Activated T-helper 2 cell treated with anti-CD3 and anti-CD28 coated beads, Interferon-gamma antibody, Interleukin-2, Interleukin-4, amounts not matched to agents 10 μg/mL and 5 μg/mL and 100 μg/mL, durations not matched to agents 14 hours and 24 hours and 36 hours (primary cell): ENCODE measurements at regions of chr4 and their contacts with region 1.

Region 1: GRCh38 chr4:14856076-14856933 is 146.0 kb upstream of the CPEB2 start:
- DNase-seq: peak; percentile 24
- H3K4me3 Mint-ChIP-seq: no peak overlapping the region
- H3K27ac Mint-ChIP-seq: peak overlapping the region; percentile 81
- H3K4me1 Mint-ChIP-seq: peaks cover 26% of the 10 kb centered on the region
- H3K27me3 Mint-ChIP-seq: no peaks in the 10 kb centered on the region

Region 2: GRCh38 chr4:14787894-14788293 is 68.4 kb before region 1 on chr4:
- intact Hi-C with region 1: loop called (anchors 1 kb)
- DNase-seq: no peak
- H3K4me3 Mint-ChIP-seq: no peak overlapping the region
- H3K27ac Mint-ChIP-seq: no peak overlapping the region
- H3K4me1 Mint-ChIP-seq: peaks cover 14% of the 10 kb centered on the region
- H3K27me3 Mint-ChIP-seq: no peaks in the 10 kb centered on the region

Region 3: DNA sequence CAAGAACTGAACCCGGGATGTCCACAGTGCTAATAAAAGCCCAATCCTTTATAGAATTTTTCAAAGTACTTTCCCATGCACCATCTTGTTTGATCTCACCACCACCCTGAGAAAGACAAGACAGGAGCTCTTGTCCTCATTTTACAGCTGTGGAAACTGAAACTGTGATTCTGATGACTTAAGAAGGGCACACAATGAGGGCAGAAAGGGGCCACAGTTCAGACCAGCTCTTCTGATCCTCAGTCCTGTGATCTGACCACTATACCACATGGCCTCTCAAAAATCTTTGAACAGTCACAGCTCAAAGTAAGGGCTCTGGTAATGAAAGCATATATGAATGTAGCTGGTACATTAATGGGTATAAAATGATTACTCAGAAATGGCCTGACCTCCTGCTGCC is 18.7 kb after region 1 on chr4:
- intact Hi-C with region 1: loop called (anchors 1 kb)
- DNase-seq: no peak
- H3K4me3 Mint-ChIP-seq: no peak overlapping the region
- H3K27ac Mint-ChIP-seq: no peak overlapping the region
- H3K4me1 Mint-ChIP-seq: peaks cover 18% of the 10 kb centered on the region
- H3K27me3 Mint-ChIP-seq: no peaks in the 10 kb centered on the region

Region 4: DNA sequence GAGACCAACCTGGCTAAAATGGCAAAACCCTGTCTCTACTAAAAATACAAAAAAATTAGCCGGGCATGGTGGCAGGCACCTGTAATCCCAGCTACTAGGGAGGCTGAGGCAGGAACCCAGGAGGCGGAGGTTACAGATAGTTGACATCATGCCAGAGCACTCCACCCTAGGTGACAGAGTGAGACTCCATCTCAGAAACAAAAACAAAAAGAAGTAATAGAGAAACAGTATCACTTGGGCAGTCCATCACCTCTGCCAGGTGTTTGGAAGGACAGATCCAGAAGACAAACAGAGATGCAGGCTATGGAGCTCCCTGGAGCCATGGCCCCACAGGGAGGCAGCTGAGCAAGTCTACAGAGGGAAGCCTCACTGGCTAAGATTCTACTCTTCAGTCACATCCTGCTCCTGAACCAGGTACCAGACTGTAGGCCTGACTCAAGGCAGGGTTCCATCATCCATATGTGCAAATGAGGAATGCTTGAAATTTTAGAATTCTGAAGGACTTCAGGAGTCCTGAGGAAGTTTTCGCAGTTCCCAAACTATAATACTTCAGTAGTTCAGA is 64.5 kb after region 1 on chr4:
- intact Hi-C with region 1: loop called (anchors 2 kb)
- DNase-seq: no peak
- H3K4me3 Mint-ChIP-seq: no peak overlapping the region
- H3K27ac Mint-ChIP-seq: no peak overlapping the region
- H3K4me1 Mint-ChIP-seq: no peaks in the 10 kb centered on the region
- H3K27me3 Mint-ChIP-seq: peaks cover 2% of the 10 kb centered on the region

Region 5: GRCh38 chr4:15117270-15117946 is 261.1 kb after region 1 on chr4:
- intact Hi-C with region 1: loop called (anchors 1 kb)
- DNase-seq: no peak
- H3K4me3 Mint-ChIP-seq: no peak overlapping the region
- H3K27ac Mint-ChIP-seq: peak overlapping the region; percentile 7
- H3K4me1 Mint-ChIP-seq: peaks cover 10% of the 10 kb centered on the region
- H3K27me3 Mint-ChIP-seq: no peaks in the 10 kb centered on the region